GM12878 (cell line): ENCODE measurements at regions of chr4 and their contacts with region 1.

Region 1: GRCh38 chr4:72094059-72094797 is 62.4 kb downstream of the NPFFR2 start:
- DNase-seq: no peak
- ATAC-seq: peak; percentile 36
- H3K4me3 ChIP-seq: no peak overlapping the region
- H3K27ac ChIP-seq: no peak overlapping the region
- H3K4me1 ChIP-seq: no peaks in the 10 kb centered on the region
- H3K27me3 ChIP-seq: no peaks in the 10 kb centered on the region
- CTCF ChIP-seq: no peak
- EP300 ChIP-seq: no peak
- POLR2A ChIP-seq: no peak
- RAD21 ChIP-seq: no peak

Region 2: GRCh38 chr4:72107456-72107855 is 13.2 kb after region 1 on chr4:
- CTCF ChIA-PET with region 1: interaction called, 9 read pairs
- POLR2A ChIA-PET with region 1: interaction called, 3 read pairs
- RAD21 ChIA-PET with region 1: interaction called, 4 read pairs
- SMC1A ChIA-PET with region 1: interaction called, 35 read pairs
- in situ Hi-C with region 1: no loop called
- intact Hi-C with region 1: no loop called
- DNase-seq: no peak
- ATAC-seq: no peak
- H3K4me3 ChIP-seq: no peak overlapping the region
- H3K27ac ChIP-seq: no peak overlapping the region
- H3K4me1 ChIP-seq: no peaks in the 10 kb centered on the region
- H3K27me3 ChIP-seq: no peaks in the 10 kb centered on the region
- CTCF ChIP-seq: no peak
- EP300 ChIP-seq: no peak
- POLR2A ChIP-seq: no peak
- RAD21 ChIP-seq: no peak

Region 3: GRCh38 chr4:72112514-72113156 is 18.4 kb after region 1 on chr4:
- CTCF ChIA-PET with region 1: interaction called, 9 read pairs
- POLR2A ChIA-PET with region 1: no interaction called
- RAD21 ChIA-PET with region 1: interaction called, 4 read pairs
- SMC1A ChIA-PET with region 1: interaction called, 35 read pairs
- in situ Hi-C with region 1: no loop called
- intact Hi-C with region 1: no loop called
- DNase-seq: peak; percentile 88
- ATAC-seq: peak; percentile 94
- H3K4me3 ChIP-seq: no peak overlapping the region
- H3K27ac ChIP-seq: peak overlapping the region; percentile 32; the same call in 1 of the 2 replicates
- H3K4me1 ChIP-seq: no peaks in the 10 kb centered on the region; the same call in 1 of the 2 replicates
- H3K27me3 ChIP-seq: no peaks in the 10 kb centered on the region
- CTCF ChIP-seq: no peak
- EP300 ChIP-seq: peak; percentile 100
- POLR2A ChIP-seq: no peak
- RAD21 ChIP-seq: 0 out of 2 replicates have a peak, but pooled peaks have one; percentile 4

Region 4: GRCh38 chr4:72239487-72240116 is 145.4 kb after region 1 on chr4:
- CTCF ChIA-PET with region 1: no interaction called
- POLR2A ChIA-PET with region 1: no interaction called
- RAD21 ChIA-PET with region 1: no interaction called
- SMC1A ChIA-PET with region 1: no interaction called
- in situ Hi-C with region 1: no loop called
- intact Hi-C with region 1: no loop called
- DNase-seq: no peak
- ATAC-seq: no peak
- H3K4me3 ChIP-seq: no peak overlapping the region
- H3K27ac ChIP-seq: no peak overlapping the region
- H3K4me1 ChIP-seq: no peaks in the 10 kb centered on the region
- H3K27me3 ChIP-seq: no peaks in the 10 kb centered on the region
- CTCF ChIP-seq: no peak
- EP300 ChIP-seq: no peak
- POLR2A ChIP-seq: no peak
- RAD21 ChIP-seq: no peak

Region 5: DNA sequence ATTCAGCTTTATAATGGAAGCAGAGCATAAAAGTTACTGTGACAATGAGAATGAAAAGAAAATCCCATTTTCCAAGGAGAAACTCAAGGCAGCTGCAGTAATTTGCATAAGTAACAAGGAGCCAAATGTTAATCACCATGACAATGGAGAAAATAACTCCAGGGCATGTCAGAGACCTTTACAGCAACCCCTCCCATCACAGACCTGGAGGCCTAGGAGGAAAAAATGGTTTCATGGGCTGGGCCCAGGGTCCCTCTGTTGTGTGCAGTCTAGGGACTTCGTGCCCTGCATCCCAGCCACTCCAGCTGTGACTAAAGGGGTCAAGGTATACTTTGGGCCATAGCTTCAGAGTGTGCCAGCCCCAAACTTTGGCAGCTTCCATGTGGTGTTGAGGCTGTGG is 161.0 kb after region 1 on chr4:
- CTCF ChIA-PET with region 1: no interaction called
- POLR2A ChIA-PET with region 1: no interaction called
- RAD21 ChIA-PET with region 1: no interaction called
- SMC1A ChIA-PET with region 1: no interaction called
- in situ Hi-C with region 1: no loop called
- intact Hi-C with region 1: no loop called
- DNase-seq: no peak
- ATAC-seq: no peak
- H3K4me3 ChIP-seq: no peak overlapping the region
- H3K27ac ChIP-seq: no peak overlapping the region
- H3K4me1 ChIP-seq: no peaks in the 10 kb centered on the region
- H3K27me3 ChIP-seq: no peaks in the 10 kb centered on the region
- CTCF ChIP-seq: no peak
- EP300 ChIP-seq: no peak
- POLR2A ChIP-seq: no peak
- RAD21 ChIP-seq: no peak